Activated naive CD4-positive, alpha-beta T cell treated with anti-CD3 and anti-CD28 coated beads for 36 hours (primary cell): ENCODE measurements at regions of chr3 and their contacts with region 1.

Region 1: DNA sequence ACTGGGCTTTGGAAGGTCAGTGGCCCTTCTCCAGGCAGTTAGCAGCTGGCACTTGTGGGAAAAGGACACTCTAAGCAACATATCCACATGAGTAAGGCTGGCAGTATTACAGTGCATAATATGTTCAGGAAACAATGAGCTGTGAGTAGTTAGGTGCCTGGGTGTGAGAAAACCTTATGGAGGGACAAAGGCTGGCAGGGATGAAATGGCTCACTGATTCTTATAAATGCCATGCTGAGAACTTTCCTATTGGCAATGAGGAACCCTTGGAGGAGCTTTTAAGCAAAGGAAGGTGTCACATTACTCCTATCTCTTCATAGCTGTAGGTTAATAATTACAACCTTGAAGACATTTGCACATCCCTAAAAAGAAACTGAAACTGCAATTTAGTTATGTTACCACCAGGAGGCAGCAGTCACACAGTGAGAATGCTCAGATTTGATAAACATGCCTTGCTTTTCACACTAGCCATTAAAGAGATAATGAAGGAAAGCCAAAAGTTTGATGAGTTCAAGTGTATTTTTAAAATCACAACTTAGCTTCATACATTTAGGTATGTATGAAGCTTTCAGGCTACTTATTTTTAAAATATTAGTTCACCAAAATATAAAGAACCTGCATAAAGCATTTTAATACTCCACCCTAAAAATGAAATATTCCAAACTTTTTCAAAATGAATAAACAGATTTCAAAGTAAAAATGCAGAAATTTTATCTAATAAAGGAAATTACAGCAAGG is 136.6 kb upstream of the SLC2A2 start:
- DNase-seq: peak; percentile 44
- H3K4me3 Mint-ChIP-seq: no peak overlapping the region
- H3K27ac Mint-ChIP-seq: no peak overlapping the region
- H3K4me1 Mint-ChIP-seq: peaks cover 25% of the 10 kb centered on the region
- H3K27me3 Mint-ChIP-seq: no peaks in the 10 kb centered on the region

Region 2: DNA sequence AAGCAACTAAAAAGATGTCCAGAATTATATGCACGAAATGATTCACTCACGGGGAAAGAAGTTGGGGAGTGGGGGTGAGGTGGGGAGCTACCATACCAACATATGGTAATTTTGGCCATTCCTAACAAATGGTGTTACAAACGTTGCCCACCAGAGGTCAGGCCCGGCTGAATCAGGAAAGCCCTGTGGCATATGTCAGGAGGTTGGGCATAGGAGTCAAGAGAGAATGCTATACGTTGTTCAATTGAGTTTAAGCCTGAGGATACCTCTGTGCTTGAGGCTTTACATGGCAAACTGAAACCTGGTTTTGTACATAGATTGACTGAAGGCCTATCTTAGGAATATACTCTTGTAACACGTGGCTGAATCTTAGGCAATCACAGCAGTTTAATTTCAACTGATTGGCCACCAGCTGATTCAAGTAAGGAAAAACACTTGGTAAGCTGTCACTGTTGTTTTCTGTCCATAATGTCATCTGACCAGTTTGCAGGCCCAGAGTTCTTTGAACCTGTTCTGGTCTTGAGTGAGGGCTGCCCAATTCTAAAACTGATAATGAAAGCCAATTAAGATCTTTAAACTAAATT is 113.2 kb before region 1 on chr3:
- CTCF ChIA-PET with region 1: interaction called, 3 read pairs
- intact Hi-C with region 1: loop called (anchors 2 kb)
- DNase-seq: peak; percentile 67
- H3K4me3 Mint-ChIP-seq: no peak overlapping the region
- H3K27ac Mint-ChIP-seq: no peak overlapping the region
- H3K4me1 Mint-ChIP-seq: no peaks in the 10 kb centered on the region
- H3K27me3 Mint-ChIP-seq: peaks cover 3% of the 10 kb centered on the region

Region 3: GRCh38 chr3:171187706-171188290 is 24.6 kb after region 1 on chr3:
- CTCF ChIA-PET with region 1: interaction called, 3 read pairs
- intact Hi-C with region 1: loop called (anchors 1 kb)
- DNase-seq: peak; percentile 35
- H3K4me3 Mint-ChIP-seq: no peak overlapping the region
- H3K27ac Mint-ChIP-seq: no peak overlapping the region
- H3K4me1 Mint-ChIP-seq: peaks cover 49% of the 10 kb centered on the region
- H3K27me3 Mint-ChIP-seq: no peaks in the 10 kb centered on the region

Region 4: DNA sequence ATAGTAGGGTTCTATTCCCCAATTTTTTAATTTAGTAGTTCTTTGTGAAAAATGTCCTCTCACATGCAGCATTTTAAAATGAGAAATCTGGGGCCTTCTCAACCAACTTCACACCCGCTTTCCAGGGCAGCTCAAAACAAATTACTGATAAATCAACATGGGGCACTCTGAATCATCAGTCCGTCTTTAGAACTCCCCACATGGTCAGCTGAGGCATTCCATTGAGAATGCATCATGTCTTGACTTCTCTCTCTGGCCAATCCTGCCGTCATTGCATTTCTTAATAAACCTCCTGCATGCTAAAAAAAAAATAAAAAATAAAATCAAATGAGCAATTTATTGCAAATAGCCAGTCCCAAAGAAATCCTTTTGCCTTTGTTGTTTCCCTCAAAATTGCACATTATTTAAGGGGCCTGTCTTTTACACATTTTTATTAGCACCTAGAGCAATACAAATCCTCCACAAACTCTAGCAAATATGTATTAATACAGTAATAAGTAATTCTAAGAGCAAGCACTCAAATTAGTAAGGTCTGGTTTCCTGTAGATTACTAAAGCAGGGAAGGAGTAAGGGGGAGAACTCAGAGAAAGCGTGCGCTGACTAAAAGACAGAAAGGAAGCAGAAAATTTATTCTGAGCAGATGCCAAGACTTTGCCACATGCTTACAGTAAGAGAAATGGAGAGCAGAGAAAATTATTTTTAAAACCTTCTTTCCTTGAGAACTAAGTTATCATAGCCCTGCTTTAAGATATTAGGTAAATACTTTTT is 121.3 kb after region 1 on chr3:
- CTCF ChIA-PET with region 1: no interaction called
- intact Hi-C with region 1: loop called (anchors 1 kb)
- DNase-seq: peak; percentile 55
- H3K4me3 Mint-ChIP-seq: peak overlapping the region; percentile 22
- H3K27ac Mint-ChIP-seq: peak overlapping the region; percentile 76
- H3K4me1 Mint-ChIP-seq: peaks cover 66% of the 10 kb centered on the region
- H3K27me3 Mint-ChIP-seq: no peaks in the 10 kb centered on the region

Region 5: DNA sequence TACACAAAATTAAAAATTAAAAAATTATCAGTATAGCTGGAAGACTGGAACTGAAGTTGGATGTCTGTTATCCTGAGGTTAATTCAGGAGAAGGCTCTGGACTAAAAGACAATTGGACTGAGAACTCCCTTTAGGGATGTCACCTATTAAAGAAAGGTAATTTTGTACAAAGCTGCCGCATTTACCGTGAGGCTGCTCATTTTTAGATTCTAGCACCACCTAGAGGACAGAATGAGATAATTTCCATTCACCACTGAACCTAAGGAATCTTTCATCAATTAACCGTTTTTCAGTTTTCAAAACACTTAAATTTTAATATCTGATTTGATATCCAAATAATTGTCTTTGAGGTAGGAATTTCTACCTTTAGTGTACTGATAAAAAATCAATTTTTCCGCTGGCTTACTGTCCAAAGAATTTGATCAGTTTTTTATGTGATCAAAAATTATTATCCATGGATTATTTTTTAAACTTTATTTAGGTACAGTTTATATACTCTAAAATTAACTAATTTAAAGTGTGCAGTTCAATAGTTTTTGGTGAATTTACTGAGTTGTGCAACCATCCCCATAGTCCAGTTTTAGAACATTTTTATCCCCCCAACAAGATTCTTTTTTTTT is 403.8 kb after region 1 on chr3:
- CTCF ChIA-PET with region 1: interaction called, 25 read pairs
- intact Hi-C with region 1: loop called (anchors 1 kb)
- DNase-seq: no peak
- H3K4me3 Mint-ChIP-seq: no peak overlapping the region
- H3K27ac Mint-ChIP-seq: no peak overlapping the region
- H3K4me1 Mint-ChIP-seq: peaks cover 9% of the 10 kb centered on the region
- H3K27me3 Mint-ChIP-seq: no peaks in the 10 kb centered on the region

Region 6: GRCh38 chr3:172341482-172342059 is 1178.4 kb after region 1 on chr3:
- CTCF ChIA-PET with region 1: no interaction called
- intact Hi-C with region 1: loop called (anchors 1 kb)
- DNase-seq: peak; percentile 14
- H3K4me3 Mint-ChIP-seq: no peak overlapping the region
- H3K27ac Mint-ChIP-seq: no peak overlapping the region
- H3K4me1 Mint-ChIP-seq: no peaks in the 10 kb centered on the region
- H3K27me3 Mint-ChIP-seq: no peaks in the 10 kb centered on the region